ENCODE measurements at regions of chr10 and their contacts with region 1.

Region 1: DNA sequence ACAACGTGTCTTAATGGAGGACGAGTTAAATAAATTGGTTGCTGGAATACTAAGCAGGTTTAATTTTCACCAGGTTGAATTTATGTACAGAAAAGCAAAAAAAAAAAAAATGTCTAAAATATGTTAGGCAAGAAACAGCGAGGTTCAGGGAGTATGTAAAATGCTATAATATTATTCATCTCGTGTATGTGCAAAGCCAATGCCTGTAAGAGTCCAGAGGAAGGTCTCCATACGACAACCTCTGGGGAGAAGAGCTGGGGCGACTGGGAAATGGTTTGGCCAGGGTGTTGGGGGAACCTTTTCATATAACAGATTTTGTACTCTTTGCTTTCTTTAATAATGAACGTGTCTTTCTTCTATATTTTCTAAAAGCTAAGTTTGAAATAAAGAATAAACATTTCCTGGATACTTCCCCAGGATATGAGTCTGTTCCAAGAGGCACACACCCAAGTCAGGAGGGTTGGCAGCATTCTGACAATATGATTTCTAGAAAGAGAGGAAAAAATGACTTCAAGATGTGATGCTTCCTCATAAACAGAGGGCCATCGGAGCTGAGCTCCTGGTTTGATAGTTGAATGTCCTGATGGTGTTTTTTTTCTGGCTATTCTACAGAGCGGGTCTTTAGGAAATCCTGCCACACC is 208.6 kb upstream of the MGMT start:
- DNase-seq: peak; percentile 82
- H3K4me3 ChIP-seq: peak overlapping the region in 1 of 3 experiments; percentile 19
- H3K27ac ChIP-seq: peak overlapping the region; percentile 30
- H3K4me1 ChIP-seq: peaks cover 17% of the 10 kb centered on the region
- H3K27me3 ChIP-seq: no peaks in the 10 kb centered on the region
- CTCF ChIP-seq: no peak
- POLR2A ChIP-seq: no peak

Region 2: GRCh38 chr10:129079705-129080104 is 178.7 kb before region 1 on chr10:
- CTCF ChIA-PET with region 1: no interaction called
- POLR2A ChIA-PET with region 1: no interaction called
- dilution Hi-C with region 1: no loop called
- intact Hi-C with region 1: no loop called
- DNase-seq: no peak
- H3K4me3 ChIP-seq: no peak overlapping the region
- H3K27ac ChIP-seq: no peak overlapping the region
- H3K4me1 ChIP-seq: no peaks in the 10 kb centered on the region
- H3K27me3 ChIP-seq: no peaks in the 10 kb centered on the region
- CTCF ChIP-seq: no peak
- POLR2A ChIP-seq: no peak

Region 3: GRCh38 chr10:129305046-129305445 is 46.6 kb after region 1 on chr10:
- CTCF ChIA-PET with region 1: no interaction called
- POLR2A ChIA-PET with region 1: interaction called, 4 read pairs
- dilution Hi-C with region 1: no loop called
- intact Hi-C with region 1: loop called (anchors 1 kb)
- DNase-seq: peak; percentile 73
- H3K4me3 ChIP-seq: peak overlapping the region in 1 of 3 experiments; percentile 7
- H3K27ac ChIP-seq: peak overlapping the region; percentile 61
- H3K4me1 ChIP-seq: peaks cover 14% of the 10 kb centered on the region
- H3K27me3 ChIP-seq: no peaks in the 10 kb centered on the region
- CTCF ChIP-seq: no peak
- POLR2A ChIP-seq: no peak

Region 4: GRCh38 chr10:129320340-129320739 is 61.9 kb after region 1 on chr10:
- CTCF ChIA-PET with region 1: no interaction called
- POLR2A ChIA-PET with region 1: no interaction called
- dilution Hi-C with region 1: no loop called
- intact Hi-C with region 1: loop called (anchors 2 kb)
- DNase-seq: no peak
- H3K4me3 ChIP-seq: no peak overlapping the region
- H3K27ac ChIP-seq: peak overlapping the region; percentile 35
- H3K4me1 ChIP-seq: peaks cover 7% of the 10 kb centered on the region
- H3K27me3 ChIP-seq: peaks cover 0 to 5% of the 10 kb centered on the region in 2 experiments
- CTCF ChIP-seq: no peak
- POLR2A ChIP-seq: no peak

Region 5: GRCh38 chr10:130341356-130341755 is 1083.0 kb after region 1 on chr10:
- CTCF ChIA-PET with region 1: no interaction called
- POLR2A ChIA-PET with region 1: no interaction called
- dilution Hi-C with region 1: no loop called
- intact Hi-C with region 1: no loop called
- DNase-seq: no peak
- H3K4me3 ChIP-seq: no peak overlapping the region
- H3K27ac ChIP-seq: no peak overlapping the region
- H3K4me1 ChIP-seq: no peaks in the 10 kb centered on the region
- H3K27me3 ChIP-seq: no peaks in the 10 kb centered on the region
- CTCF ChIP-seq: no peak
- POLR2A ChIP-seq: no peak

Measured in endothelial cell of umbilical vein (primary cell).